ENCODE measurements at regions of chr3 and their contacts with region 1.

Region 1: GRCh38 chr3:47522082-47522987 is 8.8 kb upstream of the ELP6 start:
- DNase-seq: peak; percentile 85 to 86
- H3K4me3 ChIP-seq: no peak overlapping the region
- H3K4me3 Mint-ChIP-seq: no peak overlapping the region
- H3K27ac Mint-ChIP-seq: peak overlapping the region; percentile 40
- H3K4me1 ChIP-seq: peaks cover 11% of the 10 kb centered on the region
- H3K4me1 Mint-ChIP-seq: peaks cover 7% of the 10 kb centered on the region
- H3K27me3 ChIP-seq: no peaks in the 10 kb centered on the region
- H3K27me3 Mint-ChIP-seq: no peaks in the 10 kb centered on the region
- CTCF ChIP-seq: peak; percentile 84 to 89

Region 2: DNA sequence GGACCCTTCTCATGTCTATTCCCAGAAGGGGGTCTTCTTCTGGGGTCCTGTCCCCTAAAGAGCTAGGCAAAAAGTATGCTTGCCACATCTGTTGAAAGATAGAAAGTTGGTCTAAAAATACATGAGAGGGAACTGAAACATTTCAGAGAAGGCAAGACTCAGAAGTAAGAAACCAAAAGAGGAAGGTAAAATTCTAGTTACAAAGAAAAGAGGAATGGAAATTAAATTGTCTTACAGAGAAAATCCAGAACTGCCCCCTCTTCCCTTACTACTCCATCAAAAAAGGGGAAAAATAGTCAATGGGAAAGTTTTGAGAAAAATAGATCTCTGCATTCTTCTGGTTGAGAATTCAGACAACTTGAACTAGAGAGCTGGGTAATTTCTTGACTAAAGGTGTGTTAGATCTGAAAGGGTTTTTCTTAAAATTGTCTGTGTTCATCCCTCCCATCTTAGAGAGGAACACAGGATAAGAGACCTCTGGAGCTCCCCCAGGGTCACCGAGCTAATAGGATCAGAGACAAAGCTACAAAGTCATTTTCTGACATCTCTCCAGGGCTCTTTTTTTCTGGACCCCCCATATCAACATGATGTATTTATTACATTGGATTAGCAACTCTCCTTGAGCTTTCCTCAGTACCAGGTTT is 1200.8 kb before region 1 on chr3:
- CTCF ChIA-PET with region 1: no interaction called
- POLR2A ChIA-PET with region 1: no interaction called
- intact Hi-C with region 1: no loop called
- DNase-seq: no peak
- H3K4me3 ChIP-seq: no peak overlapping the region
- H3K4me3 Mint-ChIP-seq: no peak overlapping the region
- H3K27ac Mint-ChIP-seq: no peak overlapping the region
- H3K4me1 ChIP-seq: no peaks in the 10 kb centered on the region
- H3K4me1 Mint-ChIP-seq: no peaks in the 10 kb centered on the region
- H3K27me3 ChIP-seq: no peaks in the 10 kb centered on the region
- H3K27me3 Mint-ChIP-seq: peaks cover 3% of the 10 kb centered on the region
- CTCF ChIP-seq: no peak

Region 3: DNA sequence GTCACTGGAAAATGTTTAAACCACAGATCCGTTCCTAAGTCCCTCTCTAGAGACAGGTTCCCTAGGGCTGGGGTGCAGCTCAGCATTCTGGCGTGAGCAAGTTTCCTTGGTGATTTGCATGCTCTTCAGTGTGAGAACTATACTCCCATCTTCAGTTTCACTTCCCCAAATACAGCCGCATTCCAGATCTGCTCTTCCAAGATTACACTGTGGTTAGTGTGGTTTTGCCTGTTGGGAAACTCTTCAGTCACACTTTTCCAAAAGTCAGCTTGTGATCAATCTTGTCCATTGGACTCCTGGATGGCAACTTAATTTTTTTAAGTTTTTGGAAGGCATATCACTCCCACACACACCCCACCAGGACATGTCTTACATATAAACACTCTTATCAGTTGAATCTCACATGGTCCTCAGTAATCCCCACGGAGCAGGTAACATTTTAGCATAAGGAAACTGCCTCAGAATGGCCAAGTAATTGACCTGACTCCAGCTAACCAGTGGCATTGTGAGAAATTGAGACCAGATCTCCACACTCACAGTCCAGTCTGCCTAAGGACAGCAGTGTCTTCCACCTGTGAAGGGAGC is 175.0 kb before region 1 on chr3:
- CTCF ChIA-PET with region 1: no interaction called
- POLR2A ChIA-PET with region 1: no interaction called
- intact Hi-C with region 1: no loop called
- DNase-seq: no peak
- H3K4me3 ChIP-seq: no peak overlapping the region
- H3K4me3 Mint-ChIP-seq: no peak overlapping the region
- H3K27ac Mint-ChIP-seq: no peak overlapping the region
- H3K4me1 ChIP-seq: peaks cover 9% of the 10 kb centered on the region; the same call in 1 of the 2 replicates
- H3K4me1 Mint-ChIP-seq: peaks cover 6% of the 10 kb centered on the region
- H3K27me3 ChIP-seq: no peaks in the 10 kb centered on the region
- H3K27me3 Mint-ChIP-seq: no peaks in the 10 kb centered on the region
- CTCF ChIP-seq: no peak

Region 4: GRCh38 chr3:47370887-47371697 is 151.2 kb before region 1 on chr3:
- CTCF ChIA-PET with region 1: no interaction called
- POLR2A ChIA-PET with region 1: no interaction called
- intact Hi-C with region 1: no loop called
- DNase-seq: no peak
- H3K4me3 ChIP-seq: no peak overlapping the region
- H3K4me3 Mint-ChIP-seq: no peak overlapping the region
- H3K27ac Mint-ChIP-seq: no peak overlapping the region
- H3K4me1 ChIP-seq: no peaks in the 10 kb centered on the region
- H3K4me1 Mint-ChIP-seq: peaks cover 15% of the 10 kb centered on the region
- H3K27me3 ChIP-seq: no peaks in the 10 kb centered on the region
- H3K27me3 Mint-ChIP-seq: no peaks in the 10 kb centered on the region
- CTCF ChIP-seq: peak; percentile 31 to 51

Region 5: DNA sequence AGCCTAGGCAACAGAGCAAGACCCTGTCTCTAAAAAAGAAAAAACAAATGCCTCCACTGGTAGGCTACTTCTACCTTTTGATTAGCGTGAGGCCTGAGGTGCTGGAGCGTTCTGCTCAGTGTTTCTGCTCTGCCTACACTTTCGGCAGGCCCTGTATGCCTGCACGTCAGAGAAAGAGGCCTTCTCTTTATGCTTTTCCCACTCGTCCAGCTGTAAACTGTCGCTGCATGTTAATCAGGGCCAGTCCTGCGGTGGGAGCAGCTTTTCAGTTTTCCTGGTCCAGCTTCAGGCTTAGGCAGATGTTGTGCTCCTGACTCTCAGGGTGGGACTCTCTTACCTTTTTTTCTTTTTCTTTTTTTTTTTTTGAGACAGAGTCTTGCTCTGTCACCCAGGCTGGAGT is 31.1 kb after region 1 on chr3:
- CTCF ChIA-PET with region 1: interaction called, 10 read pairs
- POLR2A ChIA-PET with region 1: no interaction called
- intact Hi-C with region 1: no loop called
- DNase-seq: no peak
- H3K4me3 ChIP-seq: no peak overlapping the region
- H3K4me3 Mint-ChIP-seq: no peak overlapping the region
- H3K27ac Mint-ChIP-seq: no peak overlapping the region
- H3K4me1 ChIP-seq: no peaks in the 10 kb centered on the region
- H3K4me1 Mint-ChIP-seq: no peaks in the 10 kb centered on the region
- H3K27me3 ChIP-seq: no peaks in the 10 kb centered on the region
- H3K27me3 Mint-ChIP-seq: peaks cover 3% of the 10 kb centered on the region
- CTCF ChIP-seq: no peak

Region 6: DNA sequence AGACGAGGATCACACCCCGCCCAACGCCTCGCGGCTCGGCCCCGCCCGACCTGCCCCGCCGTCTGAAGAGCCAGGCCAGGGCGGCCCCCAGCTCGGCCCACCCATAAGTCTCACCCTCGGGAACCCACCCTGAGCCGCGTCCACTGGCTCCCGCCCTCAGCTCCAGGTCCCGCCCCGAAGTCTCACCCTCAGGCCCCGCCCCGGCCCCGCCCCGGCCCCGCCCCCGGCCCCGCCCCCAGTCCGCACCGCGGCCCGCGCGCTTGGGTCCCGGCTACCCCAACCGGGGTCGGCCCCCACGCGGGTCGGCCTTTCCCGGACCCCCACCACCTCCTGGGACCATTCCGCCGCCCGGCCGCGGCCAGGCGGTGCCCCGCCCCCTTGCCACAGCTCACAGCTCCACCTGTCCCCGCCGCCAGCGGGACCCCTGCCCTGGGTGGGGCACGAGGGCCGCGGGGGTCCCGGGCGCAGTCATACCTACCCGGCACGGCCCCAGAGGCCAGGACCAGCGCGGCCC is 55.8 kb after region 1 on chr3:
- CTCF ChIA-PET with region 1: interaction called, 15 read pairs
- POLR2A ChIA-PET with region 1: no interaction called
- intact Hi-C with region 1: loop called (anchors 5 kb)
- DNase-seq: peak; percentile 10 to 42
- H3K4me3 ChIP-seq: peak overlapping the region; percentile 67
- H3K4me3 Mint-ChIP-seq: peak overlapping the region; percentile 66
- H3K27ac Mint-ChIP-seq: no peak overlapping the region
- H3K4me1 ChIP-seq: no peaks in the 10 kb centered on the region
- H3K4me1 Mint-ChIP-seq: no peaks in the 10 kb centered on the region
- H3K27me3 ChIP-seq: peaks cover 2% of the 10 kb centered on the region
- H3K27me3 Mint-ChIP-seq: peaks cover 5% of the 10 kb centered on the region
- CTCF ChIP-seq: no peak

Region 7: GRCh38 chr3:47664519-47664918 is 142.2 kb after region 1 on chr3:
- CTCF ChIA-PET with region 1: interaction called, 7 read pairs
- POLR2A ChIA-PET with region 1: no interaction called
- intact Hi-C with region 1: loop called (anchors 10 kb)
- DNase-seq: peak in 1 of 2 experiments; percentile 19
- H3K4me3 ChIP-seq: no peak overlapping the region
- H3K4me3 Mint-ChIP-seq: no peak overlapping the region
- H3K27ac Mint-ChIP-seq: no peak overlapping the region
- H3K4me1 ChIP-seq: peaks cover 23% of the 10 kb centered on the region
- H3K4me1 Mint-ChIP-seq: peaks cover 11% of the 10 kb centered on the region
- H3K27me3 ChIP-seq: no peaks in the 10 kb centered on the region
- H3K27me3 Mint-ChIP-seq: no peaks in the 10 kb centered on the region
- CTCF ChIP-seq: peak in 1 of 2 experiments; percentile 25

Region 8: DNA sequence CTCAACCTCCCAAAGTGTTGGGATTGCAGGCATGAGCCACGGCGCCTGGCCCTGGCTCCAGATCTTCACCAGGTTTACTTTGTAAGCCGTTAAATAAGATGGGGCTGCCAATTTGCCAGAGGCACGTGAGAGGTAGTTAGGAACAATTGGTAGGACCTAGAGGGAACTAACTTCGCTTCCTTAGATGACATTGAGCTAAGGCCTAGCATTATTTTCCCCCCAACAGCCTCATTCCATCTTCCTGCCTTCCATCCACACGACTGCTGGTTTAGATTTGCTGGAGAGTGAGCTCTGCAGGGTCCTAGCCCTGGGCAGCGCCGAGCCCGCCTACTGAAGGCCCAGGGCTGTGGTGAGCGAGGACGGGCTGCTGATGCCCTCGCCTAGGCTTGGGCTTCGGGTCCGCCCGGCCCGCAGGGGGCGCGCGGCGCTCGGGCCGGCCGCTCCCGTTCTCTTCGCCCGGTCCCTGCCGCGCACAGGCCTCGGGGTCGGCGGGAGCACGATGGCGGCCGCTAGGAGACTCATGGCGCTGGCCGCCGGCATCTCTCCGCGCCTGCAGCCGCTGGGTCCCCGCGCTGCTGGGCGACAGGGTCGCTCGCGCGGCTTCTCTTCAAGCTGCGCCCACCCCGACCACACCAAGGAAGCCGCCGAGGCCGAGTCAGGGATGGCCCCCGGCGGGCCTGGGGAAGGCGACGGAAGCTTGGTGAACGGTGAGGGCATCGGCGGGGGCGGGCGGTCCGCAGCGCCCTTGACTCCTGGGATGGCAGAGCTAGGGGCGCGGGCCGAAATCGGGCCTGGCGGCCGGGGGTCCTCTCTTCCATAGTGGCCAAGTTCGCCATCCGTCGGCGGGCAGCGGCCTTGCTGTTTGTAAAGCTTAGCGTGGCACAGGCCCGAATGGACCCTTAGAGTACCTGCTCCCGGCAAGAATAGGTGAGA is 302.5 kb after region 1 on chr3:
- CTCF ChIA-PET with region 1: interaction called, 10 read pairs
- POLR2A ChIA-PET with region 1: interaction called, 6 read pairs
- intact Hi-C with region 1: no loop called
- DNase-seq: peak; percentile 72 to 89
- H3K4me3 ChIP-seq: peak overlapping the region; percentile 66
- H3K4me3 Mint-ChIP-seq: peak overlapping the region; percentile 81
- H3K27ac Mint-ChIP-seq: peak overlapping the region; percentile 35
- H3K4me1 ChIP-seq: 0 out of 2 replicates have a peak, but pooled peaks cover 3% of the 10 kb centered on the region
- H3K4me1 Mint-ChIP-seq: peaks cover 6% of the 10 kb centered on the region
- H3K27me3 ChIP-seq: no peaks in the 10 kb centered on the region
- H3K27me3 Mint-ChIP-seq: no peaks in the 10 kb centered on the region
- CTCF ChIP-seq: peak; percentile 60 to 79